ENCODE measurements at regions of chr5 and their contacts with region 1.

Region 1: GRCh38 chr5:54492178-54492577 is 25.4 kb upstream of the SNX18 start:
- DNase-seq: no peak
- H3K27ac ChIP-seq: no peak overlapping the region
- CTCF ChIP-seq: no peak

Region 2: GRCh38 chr5:54234304-54234933 is 257.8 kb before region 1 on chr5:
- CTCF ChIA-PET with region 1: interaction called, 22 read pairs
- POLR2A ChIA-PET with region 1: no interaction called
- DNase-seq: peak; percentile 45
- H3K27ac ChIP-seq: no peak overlapping the region
- CTCF ChIP-seq: peak; percentile 78

Region 3: GRCh38 chr5:54243473-54244080 is 248.6 kb before region 1 on chr5:
- CTCF ChIA-PET with region 1: interaction called, 36 read pairs
- POLR2A ChIA-PET with region 1: no interaction called
- DNase-seq: peak; percentile 57
- H3K27ac ChIP-seq: no peak overlapping the region
- CTCF ChIP-seq: peak; percentile 80

Region 4: DNA sequence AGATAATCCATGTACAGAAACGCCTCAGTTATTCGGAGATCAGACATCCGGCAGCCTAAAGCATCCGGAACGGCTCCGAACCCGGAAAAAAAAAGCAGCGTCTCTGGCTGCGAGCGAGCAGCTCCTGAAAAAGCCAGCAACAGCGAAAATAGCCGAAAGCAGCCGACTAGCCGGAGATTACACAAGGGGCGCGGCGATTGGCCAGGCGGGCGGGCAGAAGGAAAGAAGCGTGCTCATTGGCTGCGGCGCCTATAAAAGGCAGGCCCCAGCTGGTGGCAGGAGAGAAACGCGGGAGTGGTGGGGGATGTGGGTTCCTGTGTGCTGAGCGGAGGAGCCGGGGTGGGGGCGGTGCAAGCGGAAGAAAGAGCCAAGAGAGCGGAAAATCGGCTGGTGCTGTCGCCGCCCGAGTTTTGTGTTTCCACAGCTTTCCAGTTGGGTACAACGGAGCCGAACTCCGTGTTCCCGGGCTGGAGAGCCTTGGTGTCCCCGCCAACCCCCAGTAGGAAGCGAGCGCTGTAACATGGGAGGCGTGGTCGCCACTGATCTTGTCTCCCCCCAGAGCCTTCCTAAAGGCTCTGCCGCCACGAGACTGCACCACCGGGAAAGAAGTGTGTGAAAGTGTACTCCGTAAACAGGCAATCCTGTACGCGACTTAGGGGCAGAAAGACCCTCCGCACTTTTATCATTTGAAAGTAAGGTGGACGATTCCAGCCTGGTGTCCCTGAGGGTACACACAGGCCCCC is 181.6 kb before region 1 on chr5 and contains the start of gene ARL15:
- CTCF ChIA-PET with region 1: interaction called, 16 read pairs
- POLR2A ChIA-PET with region 1: interaction called, 4 read pairs
- DNase-seq: peak; percentile 100
- H3K27ac ChIP-seq: peak within 1 kb of the TSS; percentile 88
- CTCF ChIP-seq: no peak

Region 5: DNA sequence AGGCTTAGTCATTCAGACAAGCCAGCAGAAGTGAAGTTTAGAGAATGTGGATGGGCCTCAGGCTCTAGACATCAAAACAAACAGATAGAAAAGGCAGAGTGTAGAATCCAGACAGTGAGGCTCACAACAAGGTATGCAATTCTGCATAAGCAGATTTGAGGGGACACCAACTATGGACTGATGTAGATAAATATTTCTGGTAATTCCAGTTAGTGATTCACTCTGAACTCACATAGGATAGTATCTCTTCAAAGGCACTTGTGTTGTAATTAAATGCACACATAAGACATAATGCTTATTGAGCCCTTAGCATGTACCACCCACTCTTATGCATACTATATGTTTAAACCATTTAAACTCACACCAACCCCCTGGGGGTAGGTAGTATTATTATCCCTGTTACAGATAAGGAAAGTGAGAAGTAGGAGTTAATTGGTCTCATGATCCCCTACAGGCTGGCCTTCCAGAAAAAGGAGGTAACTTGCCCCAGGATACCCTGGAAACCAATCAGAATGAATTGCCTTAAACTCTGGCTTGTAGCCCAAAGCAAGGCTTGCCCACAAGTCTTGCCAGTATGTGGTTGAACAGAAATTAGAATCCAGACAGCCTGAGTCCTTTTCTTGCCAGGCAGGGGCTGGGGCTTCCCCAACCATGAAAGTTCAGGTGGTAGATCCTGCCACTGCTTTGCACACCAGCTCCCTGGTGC is 76.1 kb before region 1 on chr5:
- CTCF ChIA-PET with region 1: interaction called, 12 read pairs
- POLR2A ChIA-PET with region 1: no interaction called
- DNase-seq: peak; percentile 72
- H3K27ac ChIP-seq: no peak overlapping the region
- CTCF ChIP-seq: no peak

Region 6: DNA sequence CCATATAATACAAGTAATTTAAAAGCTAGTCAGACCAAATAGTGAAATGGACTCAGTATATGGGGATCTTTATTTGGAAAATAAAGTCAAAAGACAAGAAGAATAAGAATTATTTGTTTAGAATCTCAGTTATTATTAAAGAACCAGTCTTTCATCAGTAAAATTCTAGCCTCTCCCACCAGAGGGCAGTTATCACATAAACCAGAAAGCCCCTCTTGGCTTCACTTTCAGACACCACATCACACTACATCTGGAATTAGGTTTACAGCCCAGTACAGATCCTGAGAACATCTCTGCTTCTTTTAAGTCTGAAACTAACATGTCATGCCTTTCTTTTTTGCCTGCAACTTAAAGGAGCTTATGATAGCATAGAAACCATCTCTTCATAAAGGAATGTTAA is 48.9 kb before region 1 on chr5:
- CTCF ChIA-PET with region 1: interaction called, 13 read pairs
- POLR2A ChIA-PET with region 1: no interaction called
- DNase-seq: peak; percentile 49
- H3K27ac ChIP-seq: no peak overlapping the region
- CTCF ChIP-seq: peak; percentile 53; the same call in 1 of the 2 replicates

Region 7: DNA sequence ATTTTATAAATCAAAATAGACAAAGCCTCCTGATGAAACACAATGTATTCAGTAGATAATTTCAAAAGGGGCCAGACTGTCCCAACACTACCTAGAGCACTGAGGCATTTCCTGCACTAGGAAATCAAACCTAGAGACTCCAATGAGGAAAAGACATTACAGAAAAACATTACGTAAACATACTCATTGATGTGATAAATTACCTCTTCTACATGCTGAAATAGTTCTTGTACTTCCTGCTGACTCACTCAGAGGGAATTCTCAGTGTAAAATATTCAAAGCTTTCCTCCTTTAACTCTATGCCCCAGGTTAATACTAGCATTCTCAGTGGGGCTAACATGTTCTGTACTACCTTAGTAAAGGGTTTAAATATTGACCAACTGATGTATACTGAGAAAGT is 315.2 kb after region 1 on chr5:
- CTCF ChIA-PET with region 1: no interaction called
- POLR2A ChIA-PET with region 1: no interaction called
- DNase-seq: peak; percentile 85
- H3K27ac ChIP-seq: peak overlapping the region; percentile 62; the same call in 1 of the 2 replicates
- CTCF ChIP-seq: no peak